Activated CD8-positive, alpha-beta T cell treated with anti-CD3 and anti-CD28 coated beads, Interleukin-2, amount 10 ng/mL, durations not matched to agents 7 days and 5 days (primary cell): ENCODE measurements at regions of chr2 and their contacts with region 1.

Region 1: GRCh38 chr2:195533771-195534642 is 123.0 kb upstream of the SLC39A10 start:
- DNase-seq: peak; percentile 81
- ATAC-seq: peak; percentile 58
- H3K4me3 Mint-ChIP-seq: peak overlapping the region; percentile 98
- H3K27ac Mint-ChIP-seq: peak overlapping the region; percentile 100
- H3K4me1 Mint-ChIP-seq: peaks cover 83% of the 10 kb centered on the region
- H3K27me3 Mint-ChIP-seq: no peaks in the 10 kb centered on the region

Region 2: DNA sequence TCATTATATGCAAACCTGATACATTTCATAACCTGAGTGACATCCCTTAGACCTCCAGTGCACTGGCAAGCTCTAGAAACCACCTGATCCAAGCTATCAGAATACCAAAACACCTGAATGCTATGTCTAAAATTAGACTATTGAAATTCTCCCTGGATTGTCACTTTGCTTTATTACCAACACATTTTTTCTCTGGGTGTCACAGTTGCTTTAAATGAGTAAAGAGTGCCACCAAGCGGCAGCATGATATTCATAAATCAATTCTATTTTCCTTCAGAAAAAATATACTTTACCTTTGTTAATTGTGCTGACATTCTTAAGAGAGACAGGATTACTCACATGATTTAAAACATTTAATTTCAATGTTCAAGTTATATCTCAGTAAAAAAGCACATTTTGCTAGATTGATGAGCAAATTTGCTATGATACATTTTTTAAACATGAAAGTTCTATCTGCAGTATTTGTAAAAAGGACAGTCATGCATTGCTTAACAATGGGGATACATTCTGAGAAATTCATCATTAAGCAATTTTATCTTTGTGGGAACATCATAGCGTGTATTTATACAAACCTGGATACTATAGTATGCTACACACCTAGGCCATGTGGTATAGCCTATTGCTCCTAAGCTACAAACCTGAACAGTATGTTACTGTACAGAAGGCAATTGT is 215.4 kb before region 1 on chr2:
- CTCF ChIA-PET with region 1: interaction called, 12 read pairs
- POLR2A ChIA-PET with region 1: no interaction called
- DNase-seq: peak; percentile 71
- ATAC-seq: no peak
- H3K4me3 Mint-ChIP-seq: no peak overlapping the region
- H3K27ac Mint-ChIP-seq: no peak overlapping the region
- H3K4me1 Mint-ChIP-seq: peaks cover 19% of the 10 kb centered on the region
- H3K27me3 Mint-ChIP-seq: no peaks in the 10 kb centered on the region

Region 3: GRCh38 chr2:195382186-195382585 is 151.8 kb before region 1 on chr2:
- CTCF ChIA-PET with region 1: no interaction called
- POLR2A ChIA-PET with region 1: no interaction called
- DNase-seq: peak; percentile 62
- ATAC-seq: peak; percentile 96
- H3K4me3 Mint-ChIP-seq: no peak overlapping the region
- H3K27ac Mint-ChIP-seq: peak overlapping the region; percentile 90
- H3K4me1 Mint-ChIP-seq: peaks cover 16% of the 10 kb centered on the region
- H3K27me3 Mint-ChIP-seq: no peaks in the 10 kb centered on the region

Region 4: DNA sequence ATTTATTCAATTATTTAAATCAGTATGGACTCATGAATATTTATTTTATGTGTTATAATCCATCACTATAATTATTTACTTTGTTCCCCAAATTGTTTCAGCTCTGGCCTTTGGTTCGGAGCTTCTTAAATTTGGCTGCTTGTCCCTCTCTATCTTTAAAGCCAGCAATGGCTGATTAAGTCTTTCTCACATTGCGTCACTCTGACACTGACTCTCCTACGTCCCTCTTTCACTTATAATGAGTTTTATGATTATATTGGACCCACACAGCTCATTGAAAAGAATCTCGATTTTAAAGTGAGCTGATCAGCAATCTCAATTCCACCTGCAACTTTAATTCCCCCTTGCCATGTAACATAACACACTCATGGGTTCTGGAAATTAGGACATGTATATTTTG is 62.2 kb before region 1 on chr2:
- CTCF ChIA-PET with region 1: no interaction called
- POLR2A ChIA-PET with region 1: no interaction called
- DNase-seq: no peak
- ATAC-seq: no peak
- H3K4me3 Mint-ChIP-seq: no peak overlapping the region
- H3K27ac Mint-ChIP-seq: no peak overlapping the region
- H3K4me1 Mint-ChIP-seq: peaks cover 16% of the 10 kb centered on the region
- H3K27me3 Mint-ChIP-seq: no peaks in the 10 kb centered on the region

Region 5: GRCh38 chr2:195498176-195498575 is 35.8 kb before region 1 on chr2:
- CTCF ChIA-PET with region 1: interaction called, 29 read pairs
- POLR2A ChIA-PET with region 1: interaction called, 7 read pairs
- DNase-seq: peak; percentile 62
- ATAC-seq: no peak
- H3K4me3 Mint-ChIP-seq: no peak overlapping the region
- H3K27ac Mint-ChIP-seq: no peak overlapping the region
- H3K4me1 Mint-ChIP-seq: peaks cover 35% of the 10 kb centered on the region
- H3K27me3 Mint-ChIP-seq: no peaks in the 10 kb centered on the region

Region 6: DNA sequence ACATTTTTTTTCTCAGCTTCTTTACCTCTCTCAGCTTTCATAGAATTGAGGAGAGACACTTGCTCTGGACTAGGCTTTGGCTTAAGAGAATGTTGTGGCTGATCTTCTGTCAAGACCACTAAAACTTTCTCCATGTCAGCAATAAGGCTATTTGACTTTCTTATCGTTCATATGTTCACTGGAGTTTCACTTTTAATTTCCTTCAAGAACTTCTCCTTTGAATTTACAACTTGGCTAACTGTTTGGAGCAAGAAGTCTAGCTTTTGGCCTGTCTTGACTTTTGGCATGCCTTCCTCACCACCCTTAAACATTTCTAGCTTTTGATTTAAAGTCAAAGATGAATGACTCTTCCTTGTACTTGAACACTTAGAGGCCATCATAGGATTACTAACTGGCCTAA is 18.6 kb after region 1 on chr2:
- CTCF ChIA-PET with region 1: interaction called, 10 read pairs
- POLR2A ChIA-PET with region 1: interaction called, 198 read pairs
- DNase-seq: no peak
- ATAC-seq: peak; percentile 22
- H3K4me3 Mint-ChIP-seq: peak overlapping the region; percentile 57
- H3K27ac Mint-ChIP-seq: peak overlapping the region; percentile 81
- H3K4me1 Mint-ChIP-seq: peaks cover 70% of the 10 kb centered on the region
- H3K27me3 Mint-ChIP-seq: no peaks in the 10 kb centered on the region

Region 7: GRCh38 chr2:195575879-195576401 is 41.9 kb after region 1 on chr2:
- CTCF ChIA-PET with region 1: interaction called, 18 read pairs
- POLR2A ChIA-PET with region 1: interaction called, 6 read pairs
- DNase-seq: peak; percentile 44
- ATAC-seq: peak; percentile 68
- H3K4me3 Mint-ChIP-seq: peak overlapping the region; percentile 36
- H3K27ac Mint-ChIP-seq: peak overlapping the region; percentile 68
- H3K4me1 Mint-ChIP-seq: peaks cover 71% of the 10 kb centered on the region
- H3K27me3 Mint-ChIP-seq: no peaks in the 10 kb centered on the region

Region 8: GRCh38 chr2:196059491-196059960 is 525.5 kb after region 1 on chr2:
- CTCF ChIA-PET with region 1: no interaction called
- POLR2A ChIA-PET with region 1: no interaction called
- DNase-seq: no peak
- ATAC-seq: no peak
- H3K4me3 Mint-ChIP-seq: no peak overlapping the region
- H3K27ac Mint-ChIP-seq: no peak overlapping the region
- H3K4me1 Mint-ChIP-seq: no peaks in the 10 kb centered on the region
- H3K27me3 Mint-ChIP-seq: peaks cover 4% of the 10 kb centered on the region